CD8-positive, alpha-beta T cell (primary cell): ENCODE measurements at regions of chr22 and their contacts with region 1.

Region 1: DNA sequence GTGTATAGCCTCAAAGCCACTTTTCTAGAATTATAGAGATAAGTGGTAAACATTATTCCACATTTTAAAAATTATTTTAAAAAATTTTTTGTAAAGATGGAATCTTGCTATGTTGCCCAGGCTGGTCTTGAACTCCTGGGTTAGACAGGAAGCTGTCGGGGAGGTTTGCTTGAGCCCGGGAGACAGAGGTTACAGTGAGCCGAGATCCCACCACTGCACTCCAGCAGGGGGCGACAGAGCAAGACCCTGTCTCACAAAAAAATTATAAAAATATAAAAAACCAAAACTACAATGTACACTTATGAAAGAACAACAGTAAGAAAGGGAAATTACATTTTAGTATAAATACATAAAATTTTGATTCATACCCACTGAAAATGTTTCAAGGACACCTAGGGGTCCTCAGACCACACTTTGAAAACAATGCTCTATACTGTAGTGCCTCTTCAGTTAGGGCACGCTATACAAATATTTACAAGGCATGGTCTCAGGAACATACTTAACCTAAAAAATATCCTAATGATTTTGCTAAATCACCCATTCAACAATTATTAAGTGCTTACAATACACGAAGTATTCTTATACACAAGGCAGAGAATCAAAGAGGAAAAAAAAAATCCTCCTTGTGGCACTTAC is 111.2 kb downstream of the MRTFA start:
- DNase-seq: peak; percentile 50 to 83 (median 76)
- ATAC-seq: peak; percentile 82
- H3K4me3 ChIP-seq: no peak overlapping the region
- H3K4me3 Mint-ChIP-seq: no peak overlapping the region
- H3K27ac ChIP-seq: no peak overlapping the region
- H3K27ac Mint-ChIP-seq: no peak overlapping the region
- H3K4me1 ChIP-seq: peaks cover 5% of the 10 kb centered on the region
- H3K4me1 Mint-ChIP-seq: peaks cover 42% of the 10 kb centered on the region
- H3K27me3 ChIP-seq: no peaks in the 10 kb centered on the region
- H3K27me3 Mint-ChIP-seq: no peaks in the 10 kb centered on the region
- CTCF ChIP-seq: peak; percentile 84

Region 2: GRCh38 chr22:40512426-40513136 is 12.8 kb before region 1 on chr22:
- CTCF ChIA-PET with region 1: interaction called, 12 read pairs
- POLR2A ChIA-PET with region 1: no interaction called
- intact Hi-C with region 1: no loop called
- DNase-seq: no peak
- ATAC-seq: no peak
- H3K4me3 ChIP-seq: no peak overlapping the region
- H3K4me3 Mint-ChIP-seq: no peak overlapping the region
- H3K27ac ChIP-seq: no peak overlapping the region
- H3K27ac Mint-ChIP-seq: no peak overlapping the region
- H3K4me1 ChIP-seq: no peaks in the 10 kb centered on the region
- H3K4me1 Mint-ChIP-seq: peaks cover 19% of the 10 kb centered on the region
- H3K27me3 ChIP-seq: no peaks in the 10 kb centered on the region
- H3K27me3 Mint-ChIP-seq: no peaks in the 10 kb centered on the region
- CTCF ChIP-seq: no peak

Region 3: DNA sequence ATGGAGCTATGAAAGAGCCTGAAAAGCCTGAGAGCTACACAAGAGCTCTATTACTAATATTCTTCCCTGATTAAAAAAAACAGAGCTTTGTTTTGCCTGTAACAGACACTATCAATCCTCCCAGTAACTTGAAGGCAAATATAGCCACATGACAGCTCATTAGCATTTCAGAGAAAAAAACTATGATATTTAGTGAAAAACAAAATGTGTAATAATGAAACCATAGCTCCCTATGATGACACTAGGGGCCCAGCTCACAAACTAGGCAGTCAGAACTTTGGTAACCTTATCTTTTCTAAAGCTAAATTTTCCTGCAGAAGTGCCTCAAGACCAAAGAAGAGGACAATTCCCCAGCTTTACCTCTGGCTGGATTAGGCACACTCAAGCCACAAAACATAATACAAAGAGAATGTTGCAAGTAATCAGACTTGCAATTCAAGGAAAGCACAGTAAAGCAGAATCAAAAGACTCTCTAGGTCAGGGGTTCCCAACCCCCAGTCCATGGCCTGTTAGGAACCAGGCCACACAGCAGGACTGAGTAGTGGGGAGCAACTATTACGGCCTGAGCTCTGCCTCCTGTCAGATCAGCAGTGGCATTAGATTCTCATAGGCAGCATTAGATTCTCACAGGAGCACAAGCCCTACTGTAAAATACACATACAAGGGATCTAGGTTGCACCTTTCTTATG is 57.8 kb after region 1 on chr22:
- CTCF ChIA-PET with region 1: interaction called, 4 read pairs
- POLR2A ChIA-PET with region 1: no interaction called
- intact Hi-C with region 1: loop called in 1 of 2 experiments (anchors 5 kb)
- DNase-seq: no peak
- ATAC-seq: no peak
- H3K4me3 ChIP-seq: no peak overlapping the region
- H3K4me3 Mint-ChIP-seq: no peak overlapping the region
- H3K27ac ChIP-seq: no peak overlapping the region
- H3K27ac Mint-ChIP-seq: peak overlapping the region; percentile 38
- H3K4me1 ChIP-seq: peaks cover 7% of the 10 kb centered on the region
- H3K4me1 Mint-ChIP-seq: peaks cover 25% of the 10 kb centered on the region
- H3K27me3 ChIP-seq: no peaks in the 10 kb centered on the region
- H3K27me3 Mint-ChIP-seq: no peaks in the 10 kb centered on the region
- CTCF ChIP-seq: no peak

Region 4: GRCh38 chr22:40636380-40637182 is 111.2 kb after region 1 on chr22 and contains the start of gene MRTFA:
- CTCF ChIA-PET with region 1: interaction called, 3 read pairs
- POLR2A ChIA-PET with region 1: no interaction called
- intact Hi-C with region 1: loop called in 1 of 2 experiments (anchors 2 kb)
- DNase-seq: peak; percentile 98 to 100 (median 99)
- ATAC-seq: peak; percentile 93
- H3K4me3 ChIP-seq: peak within 1 kb of the TSS; percentile 98 to 100
- H3K4me3 Mint-ChIP-seq: peak within 1 kb of the TSS; percentile 99
- H3K27ac ChIP-seq: peak within 1 kb of the TSS; percentile 89
- H3K27ac Mint-ChIP-seq: peak within 1 kb of the TSS; percentile 98
- H3K4me1 ChIP-seq: peaks cover 34% of the 10 kb centered on the region
- H3K4me1 Mint-ChIP-seq: peaks cover 45% of the 10 kb centered on the region
- H3K27me3 ChIP-seq: no peaks in the 10 kb centered on the region
- H3K27me3 Mint-ChIP-seq: no peaks in the 10 kb centered on the region
- CTCF ChIP-seq: no peak
- total RNA-seq, gene MRTFA: 53.7 to 56.7 TPM

Region 5: GRCh38 chr22:40764763-40765441 is 239.5 kb after region 1 on chr22:
- CTCF ChIA-PET with region 1: no interaction called
- POLR2A ChIA-PET with region 1: interaction called, 5 read pairs
- intact Hi-C with region 1: loop called in 1 of 2 experiments (anchors 10 kb)
- DNase-seq: peak in 6 of 9 experiments; percentile 7 to 52 (median 20)
- ATAC-seq: peak; percentile 67
- H3K4me3 ChIP-seq: no peak overlapping the region
- H3K4me3 Mint-ChIP-seq: peak overlapping the region; percentile 17
- H3K27ac ChIP-seq: peak overlapping the region; percentile 21 to 53
- H3K27ac Mint-ChIP-seq: peak overlapping the region; percentile 89
- H3K4me1 ChIP-seq: peaks cover 12% of the 10 kb centered on the region
- H3K4me1 Mint-ChIP-seq: peaks cover 16% of the 10 kb centered on the region
- H3K27me3 ChIP-seq: no peaks in the 10 kb centered on the region
- H3K27me3 Mint-ChIP-seq: no peaks in the 10 kb centered on the region
- CTCF ChIP-seq: no peak

Region 6: GRCh38 chr22:40856513-40857308 is 331.3 kb after region 1 on chr22 and contains the starts of genes ST13 and XPNPEP3:
- CTCF ChIA-PET with region 1: no interaction called
- POLR2A ChIA-PET with region 1: no interaction called
- intact Hi-C with region 1: no loop called
- DNase-seq: peak; percentile 92 to 98 (median 97)
- ATAC-seq: peak; percentile 88
- H3K4me3 ChIP-seq: peak within 1 kb of the TSS; percentile 85 to 97
- H3K4me3 Mint-ChIP-seq: peak within 1 kb of the TSS; percentile 98
- H3K27ac ChIP-seq: peak within 1 kb of the TSS; percentile 97 to 99
- H3K27ac Mint-ChIP-seq: peak within 1 kb of the TSS; percentile 100
- H3K4me1 ChIP-seq: peaks cover 40% of the 10 kb centered on the region
- H3K4me1 Mint-ChIP-seq: peaks cover 65% of the 10 kb centered on the region
- H3K27me3 ChIP-seq: no peaks in the 10 kb centered on the region
- H3K27me3 Mint-ChIP-seq: no peaks in the 10 kb centered on the region
- CTCF ChIP-seq: peak; percentile 42
- total RNA-seq, gene ST13: 143 to 160 TPM
- total RNA-seq, gene XPNPEP3: 13.9 to 15.2 TPM

Region 7: DNA sequence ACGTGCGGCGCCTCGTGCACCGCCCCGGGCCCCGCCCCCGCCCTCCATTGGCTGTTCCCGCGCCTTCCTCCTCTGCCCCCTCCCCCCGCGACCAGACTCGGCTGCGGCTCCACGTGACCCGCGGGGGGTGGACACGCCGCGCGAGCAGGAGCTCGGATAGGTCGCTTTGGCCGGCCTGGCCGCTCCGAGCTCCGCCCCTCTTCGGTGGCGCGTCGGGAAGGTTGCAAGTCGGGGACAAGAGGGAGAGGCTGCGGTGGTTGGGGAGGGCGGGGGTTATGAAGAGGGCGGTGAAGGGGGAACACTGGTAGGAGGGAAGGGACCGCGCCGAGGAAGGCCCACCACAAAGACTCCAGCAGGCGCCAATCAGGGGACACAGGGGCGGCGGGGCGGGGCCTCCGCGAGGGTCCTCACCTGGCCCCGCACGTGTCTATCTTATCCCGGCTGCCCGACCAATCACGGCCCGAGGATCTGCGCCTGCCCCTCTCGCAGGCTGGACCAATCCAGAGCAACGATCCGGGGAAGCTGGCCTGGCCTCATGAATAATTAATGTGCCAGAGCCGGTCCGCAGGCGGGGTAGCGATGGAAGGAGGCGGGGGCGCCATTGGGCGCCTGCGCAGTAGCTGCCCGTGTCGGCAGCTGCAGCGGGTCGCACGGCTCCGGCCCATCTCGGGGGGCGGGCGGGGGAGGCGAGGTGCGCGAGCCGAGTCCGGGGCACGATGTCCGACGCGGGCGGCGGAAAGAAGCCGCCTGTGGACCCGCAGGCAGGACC is 856.1 kb after region 1 on chr22 and contains the start of gene TEF:
- CTCF ChIA-PET with region 1: no interaction called
- POLR2A ChIA-PET with region 1: no interaction called
- intact Hi-C with region 1: no loop called
- DNase-seq: peak; percentile 97 to 100 (median 98)
- ATAC-seq: peak; percentile 80
- H3K4me3 ChIP-seq: peak within 1 kb of the TSS; percentile 71 to 88
- H3K4me3 Mint-ChIP-seq: peak within 1 kb of the TSS; percentile 93
- H3K27ac ChIP-seq: peak within 1 kb of the TSS; percentile 87 to 95
- H3K27ac Mint-ChIP-seq: peak within 1 kb of the TSS; percentile 93
- H3K4me1 ChIP-seq: peaks cover 15% of the 10 kb centered on the region
- H3K4me1 Mint-ChIP-seq: peaks cover 21% of the 10 kb centered on the region
- H3K27me3 ChIP-seq: no peaks in the 10 kb centered on the region
- H3K27me3 Mint-ChIP-seq: no peaks in the 10 kb centered on the region
- CTCF ChIP-seq: no peak
- total RNA-seq, gene TEF: 2.8 to 3.8 TPM